Thyroid gland (tissue), 4 donors: ENCODE measurements at regions of chr5 and their contacts with region 1.

Region 1: DNA sequence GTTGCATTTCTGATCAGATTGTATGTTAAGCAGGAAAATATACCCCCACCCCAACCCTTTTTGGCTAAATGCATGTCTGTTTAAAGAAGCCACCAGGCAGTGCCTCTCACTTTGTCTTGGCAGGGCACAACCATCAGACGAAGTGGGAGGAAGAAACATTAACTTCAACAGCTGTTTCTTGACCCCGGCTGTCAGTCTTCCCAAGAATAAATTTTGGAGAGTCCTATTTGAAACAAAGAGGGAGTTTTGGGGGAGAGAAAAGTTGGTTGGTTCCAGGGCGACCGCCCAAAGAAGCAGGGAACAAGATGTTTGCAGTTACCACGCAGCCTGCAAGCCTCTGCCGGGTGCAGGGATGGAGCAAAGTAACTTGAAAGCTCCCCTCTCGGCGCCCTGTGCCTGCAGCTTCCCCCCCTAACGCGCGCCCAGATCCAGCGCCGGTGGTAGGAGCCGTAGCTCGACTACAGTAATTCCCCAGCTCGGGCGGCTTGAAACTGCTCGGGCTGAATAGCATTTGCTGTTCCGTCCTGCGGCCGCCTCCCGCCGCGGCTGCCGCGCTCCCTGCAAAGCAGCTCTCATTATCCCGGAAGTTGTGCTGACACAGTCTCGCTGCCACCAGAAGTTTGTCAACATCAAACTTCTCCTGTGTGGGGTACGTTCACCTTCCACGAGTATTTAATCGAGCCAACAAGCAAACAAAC is 100.7 kb upstream of the SSBP2 start:
- DNase-seq: peak; percentile 97 to 98
- H3K4me3 ChIP-seq: peak overlapping the region in 2 of 3 donors; percentile 2 to 51
- H3K27ac ChIP-seq: peak overlapping the region; percentile 60 to 94 (median 88)
- H3K4me1 ChIP-seq: peaks cover 26 to 30% of the 10 kb centered on the region in 2 donors
- H3K27me3 ChIP-seq: no peaks in the 10 kb centered on the region
- CTCF ChIP-seq: peak in 2 of 6 experiments; percentile 12 to 18
- POLR2A ChIP-seq: peak in 1 of 2 donors; percentile 78

Region 2: GRCh38 chr5:81212211-81212751 is 639.3 kb before region 1 on chr5:
- intact Hi-C with region 1: no loop called
- DNase-seq: no peak
- H3K4me3 ChIP-seq: no peak overlapping the region
- H3K27ac ChIP-seq: no peak overlapping the region
- H3K4me1 ChIP-seq: no peaks in the 10 kb centered on the region
- H3K27me3 ChIP-seq: no peaks in the 10 kb centered on the region
- CTCF ChIP-seq: no peak
- POLR2A ChIP-seq: no peak

Region 3: DNA sequence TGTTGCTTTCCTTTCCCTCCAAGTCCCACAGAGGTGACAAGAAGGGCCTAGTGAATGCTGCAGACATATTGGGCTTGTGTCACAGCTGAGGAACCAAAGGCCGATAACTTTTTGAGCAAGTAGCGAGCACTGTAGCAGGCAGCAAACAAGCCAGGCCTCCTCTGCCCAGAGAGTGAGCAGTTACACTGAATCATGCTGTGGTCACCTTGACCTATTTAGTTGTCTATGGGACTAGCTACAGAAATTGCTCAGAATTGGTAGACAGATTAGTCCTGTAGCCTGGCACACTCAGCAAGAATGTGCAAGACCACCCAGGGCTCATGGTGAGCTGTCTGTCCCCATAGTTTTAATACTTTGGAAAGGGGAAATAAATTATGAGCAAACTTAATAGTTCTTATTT is 525.1 kb before region 1 on chr5:
- intact Hi-C with region 1: no loop called
- DNase-seq: no peak
- H3K4me3 ChIP-seq: no peak overlapping the region
- H3K27ac ChIP-seq: no peak overlapping the region
- H3K4me1 ChIP-seq: no peaks in the 10 kb centered on the region
- H3K27me3 ChIP-seq: no peaks in the 10 kb centered on the region
- CTCF ChIP-seq: no peak
- POLR2A ChIP-seq: no peak

Region 4: DNA sequence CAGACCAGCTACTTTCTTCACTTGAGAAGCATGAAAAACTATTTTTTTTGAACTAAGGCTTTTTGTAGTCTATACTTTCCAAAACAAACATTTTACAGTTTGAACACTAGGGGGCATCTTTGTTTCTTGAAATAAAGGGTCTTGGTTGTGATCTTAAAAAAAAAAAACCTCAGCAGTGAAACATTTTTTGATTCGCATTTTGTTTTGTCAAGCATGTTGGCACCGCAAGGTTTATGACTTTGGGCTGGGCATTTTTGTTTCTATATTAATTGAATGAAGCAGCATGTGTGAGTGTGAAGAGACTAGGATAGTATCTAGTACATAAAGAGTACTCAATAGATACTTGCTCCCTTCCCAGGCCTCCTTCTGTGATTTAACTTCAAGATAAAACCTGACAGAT is 426.1 kb before region 1 on chr5:
- intact Hi-C with region 1: loop called (anchors 10 kb)
- DNase-seq: no peak
- H3K4me3 ChIP-seq: no peak overlapping the region
- H3K27ac ChIP-seq: no peak overlapping the region
- H3K4me1 ChIP-seq: peaks cover 3 to 5% of the 10 kb centered on the region in 2 donors
- H3K27me3 ChIP-seq: no peaks in the 10 kb centered on the region
- CTCF ChIP-seq: peak in 4 of 6 experiments; percentile 53 to 70 (median 61)
- POLR2A ChIP-seq: no peak

Region 5: DNA sequence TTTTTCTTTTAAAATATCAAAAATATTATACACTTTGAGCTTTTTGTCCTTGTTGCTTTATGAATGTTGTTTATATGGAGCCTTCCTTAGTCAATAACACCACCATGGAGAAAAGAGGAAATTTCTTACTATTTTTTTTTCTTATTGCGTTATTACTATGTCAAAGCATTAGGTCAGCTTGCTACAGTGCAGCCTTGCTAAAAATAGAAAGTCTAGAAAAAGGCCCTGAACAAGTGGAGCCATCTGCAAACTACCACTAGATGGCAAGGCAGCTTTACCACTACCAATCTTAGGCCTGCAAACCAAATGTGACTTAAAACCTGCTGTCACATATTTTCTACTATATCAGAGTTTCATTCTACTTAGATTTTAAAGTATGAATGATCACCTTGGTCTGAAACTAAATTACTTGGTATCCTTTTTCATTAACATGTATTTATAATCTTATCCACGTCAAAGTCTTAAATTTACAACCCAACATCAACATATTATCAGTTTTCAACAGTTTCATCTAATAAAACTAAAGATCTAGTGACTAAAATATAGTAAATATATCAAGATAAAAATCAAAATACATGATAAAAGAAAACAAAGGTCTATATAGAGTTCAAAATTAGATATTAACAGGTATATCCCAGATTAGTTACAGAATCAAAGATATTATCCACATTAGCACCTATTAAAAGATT is 344.6 kb before region 1 on chr5:
- intact Hi-C with region 1: loop called (anchors 10 kb)
- DNase-seq: peak; percentile 58
- H3K4me3 ChIP-seq: no peak overlapping the region
- H3K27ac ChIP-seq: peak overlapping the region in 2 of 3 donors; percentile 49 to 60
- H3K4me1 ChIP-seq: no peaks in the 10 kb centered on the region
- H3K27me3 ChIP-seq: no peaks in the 10 kb centered on the region
- CTCF ChIP-seq: peak; percentile 61 to 94 (median 92)
- POLR2A ChIP-seq: no peak

Region 6: DNA sequence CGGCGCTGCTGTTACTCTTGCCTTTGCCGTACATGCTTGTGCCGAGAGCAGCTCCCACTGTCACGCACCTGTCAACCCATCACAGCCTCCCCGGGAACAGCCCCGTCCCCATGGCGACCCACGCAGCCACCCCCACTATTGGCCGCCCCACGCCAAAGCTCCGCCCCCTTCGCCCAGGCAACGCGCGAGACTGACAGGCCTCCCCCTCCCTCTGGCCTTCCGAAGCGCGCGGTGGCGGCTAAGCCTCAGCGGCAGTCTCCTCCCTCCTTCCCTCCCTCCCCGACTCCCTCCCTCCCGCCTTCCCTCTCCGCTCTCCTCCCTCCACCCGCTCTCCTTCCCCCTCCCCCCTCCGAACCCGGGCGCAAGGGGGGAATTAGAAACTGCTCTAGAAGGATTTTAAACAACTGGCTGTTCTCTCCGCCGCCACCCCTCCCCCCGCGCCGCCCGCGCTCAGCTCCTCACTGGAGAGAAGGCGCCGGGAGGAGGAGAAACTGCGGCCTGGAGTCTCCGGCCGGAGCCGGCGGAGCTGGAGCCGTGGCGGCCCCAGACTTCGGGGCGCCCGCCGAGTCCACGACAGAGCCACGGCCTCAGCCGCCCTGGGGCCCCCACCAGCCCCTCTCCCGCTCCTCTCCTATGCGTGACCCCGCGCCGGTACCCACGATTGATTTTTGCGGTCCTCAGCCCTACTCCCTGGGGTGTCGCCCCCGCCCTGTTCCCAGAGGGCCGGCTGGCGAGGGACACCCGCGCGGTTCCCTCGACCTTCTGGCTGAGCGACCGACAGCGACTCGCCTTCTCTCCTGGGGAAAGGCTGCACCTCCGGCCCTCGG is 100.4 kb before region 1 on chr5 and contains the start of gene SSBP2:
- intact Hi-C with region 1: loop called (anchors 2 kb)
- DNase-seq: peak; percentile 99
- H3K4me3 ChIP-seq: peak within 1 kb of the TSS; percentile 14 to 93 (median 68)
- H3K27ac ChIP-seq: peak within 1 kb of the TSS; percentile 98 to 100 (median 98)
- H3K4me1 ChIP-seq: peaks cover 31% of the 10 kb centered on the region in 2 donors
- H3K27me3 ChIP-seq: no peaks in the 10 kb centered on the region
- CTCF ChIP-seq: peak in 1 of 6 experiments; percentile 22
- POLR2A ChIP-seq: peak; percentile 55 to 91
- total RNA-seq, gene SSBP2: 38.6 to 58.5 (median 51.8) TPM

Region 7: GRCh38 chr5:81768667-81769452 is 82.8 kb before region 1 on chr5:
- intact Hi-C with region 1: no loop called
- DNase-seq: no peak
- H3K4me3 ChIP-seq: no peak overlapping the region
- H3K27ac ChIP-seq: no peak overlapping the region
- H3K4me1 ChIP-seq: no peaks in the 10 kb centered on the region
- H3K27me3 ChIP-seq: no peaks in the 10 kb centered on the region
- CTCF ChIP-seq: no peak
- POLR2A ChIP-seq: no peak

Region 8: DNA sequence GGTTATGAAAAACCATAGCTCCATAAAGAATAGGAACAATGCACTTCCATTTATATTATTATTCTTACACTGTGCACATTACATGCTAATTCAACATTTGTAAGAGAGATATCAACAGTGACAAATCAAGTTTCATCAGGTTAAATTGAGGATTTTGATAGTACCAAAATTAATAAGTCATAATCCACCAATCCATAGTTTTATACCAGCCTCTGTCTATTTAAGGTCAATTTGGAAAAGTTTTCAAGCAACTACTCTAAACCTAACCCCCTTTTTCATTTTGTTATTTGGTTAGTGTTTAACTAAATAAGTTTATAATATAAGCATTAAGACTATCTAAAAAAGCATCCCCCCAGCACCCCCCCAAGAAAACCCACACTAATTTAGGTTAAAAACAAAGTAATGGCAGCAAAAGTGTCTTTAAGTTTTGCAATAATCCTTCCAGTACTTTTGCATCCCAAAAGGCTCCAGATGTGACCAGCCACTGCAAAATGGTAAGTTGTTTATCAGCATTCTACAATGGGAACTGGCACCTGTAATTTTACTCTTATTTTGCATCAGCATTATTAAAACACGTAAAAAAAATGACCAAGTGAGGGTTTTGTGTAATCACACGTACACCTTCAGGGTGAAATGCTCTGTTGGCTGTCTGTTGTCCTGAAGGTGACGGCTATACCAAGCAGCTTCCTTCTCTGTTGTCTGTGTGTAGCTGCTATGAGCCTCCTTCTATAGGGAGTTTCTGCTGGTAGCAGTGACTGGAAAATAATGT is 64.0 kb before region 1 on chr5:
- intact Hi-C with region 1: loop called (anchors 5 kb)
- DNase-seq: peak; percentile 82
- H3K4me3 ChIP-seq: no peak overlapping the region
- H3K27ac ChIP-seq: peak overlapping the region; percentile 5 to 32 (median 15)
- H3K4me1 ChIP-seq: peaks cover 20 to 25% of the 10 kb centered on the region in 2 donors
- H3K27me3 ChIP-seq: no peaks in the 10 kb centered on the region
- CTCF ChIP-seq: no peak
- POLR2A ChIP-seq: no peak

Region 9: DNA sequence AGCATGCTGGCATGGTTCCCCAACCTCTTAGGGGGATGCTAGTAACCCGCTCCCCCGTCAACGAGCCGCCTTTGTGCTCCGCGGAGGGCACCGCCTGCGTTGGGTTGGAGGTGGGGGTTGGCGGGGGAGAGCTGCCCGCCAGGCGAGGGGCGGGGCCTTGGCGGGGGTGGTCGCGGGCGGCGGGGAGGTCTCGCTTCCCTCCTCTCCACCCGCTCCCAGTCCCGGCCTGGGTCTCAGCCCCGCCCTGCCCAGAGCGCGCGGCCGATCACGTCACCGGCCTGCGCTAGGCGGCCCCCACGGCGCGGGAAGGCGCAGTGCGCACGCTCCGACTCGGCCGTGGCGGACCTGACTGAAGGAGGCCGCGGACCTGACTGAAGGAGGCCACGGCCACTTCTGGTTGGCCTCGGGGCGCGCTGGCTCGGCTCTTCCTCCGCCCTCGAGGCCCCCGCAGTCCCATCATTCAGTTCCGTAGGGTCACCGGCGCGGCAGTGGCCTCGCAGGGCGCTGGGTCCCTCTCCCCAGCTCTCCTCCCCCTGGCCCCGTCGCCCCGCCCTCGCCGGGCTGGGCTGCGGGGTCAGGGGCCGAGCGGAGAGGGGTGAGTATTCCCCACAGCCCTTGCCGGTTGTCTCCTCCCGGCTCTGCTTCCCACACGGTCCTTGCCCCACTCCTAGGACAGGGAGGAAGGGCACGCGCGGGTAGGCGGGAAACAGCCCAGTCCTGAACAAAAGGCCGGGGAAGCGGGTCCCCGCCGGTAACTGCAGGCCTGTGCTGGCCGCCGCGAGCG is 120.3 kb after region 1 on chr5 and contains the start of gene ATG10:
- intact Hi-C with region 1: loop called (anchors 10 kb)
- DNase-seq: peak; percentile 91 to 92
- H3K4me3 ChIP-seq: peak within 1 kb of the TSS; percentile 41 to 97 (median 73)
- H3K27ac ChIP-seq: peak within 1 kb of the TSS; percentile 95 to 100 (median 98)
- H3K4me1 ChIP-seq: peaks cover 0 to 6% of the 10 kb centered on the region in 2 donors
- H3K27me3 ChIP-seq: no peaks in the 10 kb centered on the region
- CTCF ChIP-seq: no peak
- POLR2A ChIP-seq: peak; percentile 67 to 97
- total RNA-seq, gene ATG10: 8.5 to 15.2 (median 11.6) TPM

Region 10: DNA sequence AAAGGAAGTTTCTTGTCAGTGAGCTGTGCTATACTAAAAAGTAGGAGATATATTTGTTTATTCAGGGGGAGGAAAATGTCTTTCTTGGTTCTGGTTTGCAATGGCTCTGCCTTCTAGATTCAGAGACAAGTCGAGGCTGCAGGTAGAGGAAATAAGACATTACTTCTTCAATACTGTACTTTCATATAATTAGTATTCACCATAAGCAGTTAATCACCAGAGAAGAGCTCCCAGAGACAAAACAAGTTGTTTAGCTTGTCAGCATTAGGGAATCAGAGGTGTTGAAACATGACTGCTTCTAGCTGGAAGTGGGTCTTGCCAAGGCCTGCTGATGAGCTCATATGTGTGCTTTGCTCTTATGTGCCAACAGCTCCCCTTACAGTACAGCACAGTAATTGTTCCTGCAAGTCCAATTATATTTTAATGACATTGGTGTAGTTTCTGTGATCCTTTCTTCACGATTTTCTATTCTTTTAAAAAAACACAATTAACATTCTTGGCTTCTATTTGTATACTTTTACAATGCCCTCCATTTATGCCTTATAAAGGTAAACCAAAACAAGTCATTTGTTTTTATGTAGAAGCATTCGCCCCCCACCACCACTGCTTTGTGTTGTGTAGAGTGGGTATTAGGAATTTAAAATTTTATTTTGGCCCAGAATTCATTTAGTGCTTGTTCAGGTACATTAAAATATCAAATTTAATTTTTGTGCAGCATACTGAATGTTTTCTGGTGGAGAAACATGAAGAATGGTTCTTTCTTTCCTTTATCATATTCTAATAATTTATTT is 314.3 kb after region 1 on chr5:
- intact Hi-C with region 1: loop called (anchors 10 kb)
- DNase-seq: peak; percentile 74
- H3K4me3 ChIP-seq: no peak overlapping the region
- H3K27ac ChIP-seq: peak overlapping the region in 2 of 3 donors; percentile 24 to 54
- H3K4me1 ChIP-seq: peaks cover 7% of the 10 kb centered on the region in 2 donors
- H3K27me3 ChIP-seq: no peaks in the 10 kb centered on the region
- CTCF ChIP-seq: peak; percentile 33 to 98 (median 81)
- POLR2A ChIP-seq: no peak

Region 11: DNA sequence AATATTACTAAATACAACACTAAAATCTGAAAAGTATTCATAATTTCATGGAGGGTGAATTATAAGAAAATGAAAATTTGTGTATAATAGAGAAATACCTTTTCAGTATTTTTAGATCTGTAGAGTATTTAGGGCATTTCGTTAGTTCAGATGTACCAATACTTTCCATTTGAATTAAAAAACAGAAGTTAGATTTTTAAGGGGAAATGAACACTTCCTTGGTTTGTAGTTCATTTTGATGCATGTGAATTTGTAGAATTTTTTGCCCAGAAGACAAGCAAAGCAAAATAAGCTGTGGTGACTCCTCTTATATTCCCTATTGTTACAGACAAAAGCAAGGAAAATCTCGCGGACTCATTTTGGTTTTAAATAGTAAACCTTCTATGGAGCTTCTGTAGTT is 635.5 kb after region 1 on chr5:
- intact Hi-C with region 1: no loop called
- DNase-seq: no peak
- H3K4me3 ChIP-seq: no peak overlapping the region
- H3K27ac ChIP-seq: no peak overlapping the region
- H3K4me1 ChIP-seq: no peaks in the 10 kb centered on the region
- H3K27me3 ChIP-seq: no peaks in the 10 kb centered on the region
- CTCF ChIP-seq: no peak
- POLR2A ChIP-seq: no peak